Esophagus muscularis mucosa (tissue), 4 donors: ENCODE measurements at regions of chr6 and their contacts with region 1.

Region 1: DNA sequence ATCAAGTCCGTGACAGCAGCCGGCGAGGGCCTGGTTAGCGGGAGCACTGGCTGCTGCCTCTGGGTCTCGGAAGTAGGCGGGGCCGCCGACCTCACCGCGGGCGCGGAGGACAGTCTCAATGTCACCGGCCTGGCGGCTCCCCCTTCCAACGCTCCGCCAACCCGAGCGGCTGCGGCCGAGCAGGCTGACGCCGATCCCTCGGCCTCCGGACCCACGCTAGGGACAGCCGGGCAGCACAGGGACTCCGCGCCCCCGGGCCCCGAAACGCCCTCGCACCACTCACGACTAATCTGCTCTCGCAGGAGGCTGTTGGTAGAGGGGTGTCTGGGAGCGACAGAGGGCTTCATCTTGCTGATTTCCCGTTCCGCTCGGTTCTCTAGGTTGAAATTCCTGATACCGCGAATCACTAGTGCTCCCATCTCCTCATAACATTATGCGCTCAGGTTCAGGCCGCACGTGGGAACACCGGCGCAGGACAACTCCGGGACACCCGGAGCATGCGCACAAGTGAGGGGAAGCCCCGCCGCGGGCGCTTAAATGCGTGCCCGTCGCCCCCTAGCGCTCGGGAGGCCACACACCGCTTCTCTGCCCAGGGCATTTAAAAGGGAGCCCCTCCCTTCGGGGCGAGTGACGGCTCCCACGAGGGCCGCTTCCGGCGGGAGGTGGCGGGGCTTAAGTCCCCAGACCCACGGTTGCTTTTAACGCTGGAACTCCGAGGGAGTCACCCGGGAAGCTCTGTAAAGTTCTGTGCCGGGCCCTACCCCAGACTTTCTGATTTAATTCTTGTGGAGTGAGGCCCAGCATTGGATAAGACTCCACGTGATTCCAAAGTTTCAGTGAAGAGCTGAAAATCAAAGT is at the start of gene NDUFAF4:
- DNase-seq: peak; percentile 97
- H3K4me3 ChIP-seq: peak within 1 kb of the TSS; percentile 80 to 98 (median 88)
- H3K27ac ChIP-seq: peak within 1 kb of the TSS; percentile 89 to 94 (median 92)
- H3K4me1 ChIP-seq: peaks cover 40 to 50% (median 43%) of the 10 kb centered on the region in 4 donors
- H3K27me3 ChIP-seq: peaks cover 0 to 4% (median 0%) of the 10 kb centered on the region in 4 donors
- CTCF ChIP-seq: peak; percentile 93 to 96 (median 94)
- EP300 ChIP-seq: no peak
- POLR2A ChIP-seq: peak; percentile 19
- total RNA-seq, gene NDUFAF4: 26.1 to 36.2 (median 31.0) TPM

Region 2: DNA sequence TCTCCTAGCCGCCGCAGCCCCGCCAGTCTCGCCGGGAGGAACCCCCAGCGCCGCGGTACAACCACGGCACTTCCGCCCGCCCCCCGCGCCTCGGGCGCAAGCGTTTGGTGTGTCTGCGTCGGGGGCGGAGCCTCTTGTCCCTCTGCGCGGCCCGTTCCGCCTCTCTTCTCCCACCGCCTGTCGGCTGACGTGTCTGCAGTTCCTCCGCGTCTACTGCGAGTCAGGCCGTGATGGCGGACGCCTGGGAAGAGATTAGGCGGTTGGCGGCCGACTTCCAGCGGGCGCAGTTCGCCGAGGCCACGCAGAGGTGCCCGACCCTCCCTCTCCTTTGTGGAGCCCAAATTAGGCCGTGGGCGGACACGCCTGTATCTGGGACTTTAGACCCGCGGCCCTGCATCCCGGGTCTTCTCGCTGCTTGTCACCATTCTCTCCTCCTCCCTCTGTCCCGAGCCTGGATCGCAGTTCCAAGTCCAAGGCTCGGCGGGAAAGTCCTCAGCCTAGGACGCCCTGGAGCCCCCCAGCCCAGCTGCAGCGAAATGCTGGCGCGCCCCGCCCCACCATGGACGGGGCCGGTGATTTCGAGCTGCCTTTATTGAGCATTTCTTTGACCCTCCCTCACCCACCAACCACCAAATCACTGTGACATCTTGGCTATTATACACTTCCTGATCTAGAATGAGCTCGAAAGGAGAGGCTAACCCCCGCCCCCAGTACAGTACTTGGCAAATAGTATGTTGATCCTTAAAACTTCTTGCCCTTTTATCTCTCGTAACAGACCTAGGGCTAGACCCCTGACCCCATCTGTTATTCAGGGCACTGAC is 375.8 kb before region 1 on chr6 and contains the start of gene UFL1:
- intact Hi-C with region 1: loop called (anchors 10 kb)
- DNase-seq: peak; percentile 97
- H3K4me3 ChIP-seq: peak within 1 kb of the TSS; percentile 72 to 95 (median 79)
- H3K27ac ChIP-seq: peak within 1 kb of the TSS; percentile 92 to 97 (median 93)
- H3K4me1 ChIP-seq: peaks cover 21 to 38% (median 30%) of the 10 kb centered on the region in 4 donors
- H3K27me3 ChIP-seq: no peaks in the 10 kb centered on the region
- CTCF ChIP-seq: peak in 1 of 3 experiments; percentile 27
- EP300 ChIP-seq: no peak
- POLR2A ChIP-seq: peak; percentile 69
- total RNA-seq, gene UFL1: 21.3 to 27.0 (median 23.2) TPM

Region 3: DNA sequence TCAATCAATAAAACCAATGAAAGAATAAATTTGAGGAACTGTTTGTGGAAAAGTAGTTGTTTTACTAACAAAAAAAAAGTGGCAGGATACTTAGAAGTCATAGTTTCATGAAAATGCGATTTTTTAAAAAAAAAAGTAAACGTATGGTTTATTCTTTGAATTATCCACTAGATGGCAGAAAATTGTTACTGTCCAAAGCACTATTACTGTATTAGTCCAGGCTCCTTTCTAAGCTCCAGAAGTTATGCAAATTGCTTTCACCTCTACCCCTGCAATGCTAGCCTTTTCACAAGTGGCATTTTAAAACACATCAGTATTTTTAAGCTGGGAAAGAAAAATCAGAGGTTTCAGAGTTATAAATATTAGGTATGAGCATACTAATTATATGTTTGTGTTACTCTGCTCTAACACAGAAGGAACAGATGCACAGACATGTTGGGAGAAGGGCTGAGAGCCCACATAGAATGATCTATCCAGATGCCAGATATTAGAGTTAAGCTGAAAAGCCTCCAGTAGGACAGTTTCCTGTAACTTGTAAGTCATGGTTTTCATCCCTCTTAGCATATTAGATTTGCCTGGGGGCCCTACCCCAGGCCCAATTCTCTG is 270.8 kb before region 1 on chr6:
- intact Hi-C with region 1: loop called (anchors 10 kb)
- DNase-seq: no peak
- H3K4me3 ChIP-seq: no peak overlapping the region
- H3K27ac ChIP-seq: no peak overlapping the region
- H3K4me1 ChIP-seq: peaks cover 0 to 3% (median 0%) of the 10 kb centered on the region in 4 donors
- H3K27me3 ChIP-seq: no peaks in the 10 kb centered on the region
- CTCF ChIP-seq: peak; percentile 14 to 38 (median 27)
- EP300 ChIP-seq: no peak
- POLR2A ChIP-seq: no peak

Region 4: DNA sequence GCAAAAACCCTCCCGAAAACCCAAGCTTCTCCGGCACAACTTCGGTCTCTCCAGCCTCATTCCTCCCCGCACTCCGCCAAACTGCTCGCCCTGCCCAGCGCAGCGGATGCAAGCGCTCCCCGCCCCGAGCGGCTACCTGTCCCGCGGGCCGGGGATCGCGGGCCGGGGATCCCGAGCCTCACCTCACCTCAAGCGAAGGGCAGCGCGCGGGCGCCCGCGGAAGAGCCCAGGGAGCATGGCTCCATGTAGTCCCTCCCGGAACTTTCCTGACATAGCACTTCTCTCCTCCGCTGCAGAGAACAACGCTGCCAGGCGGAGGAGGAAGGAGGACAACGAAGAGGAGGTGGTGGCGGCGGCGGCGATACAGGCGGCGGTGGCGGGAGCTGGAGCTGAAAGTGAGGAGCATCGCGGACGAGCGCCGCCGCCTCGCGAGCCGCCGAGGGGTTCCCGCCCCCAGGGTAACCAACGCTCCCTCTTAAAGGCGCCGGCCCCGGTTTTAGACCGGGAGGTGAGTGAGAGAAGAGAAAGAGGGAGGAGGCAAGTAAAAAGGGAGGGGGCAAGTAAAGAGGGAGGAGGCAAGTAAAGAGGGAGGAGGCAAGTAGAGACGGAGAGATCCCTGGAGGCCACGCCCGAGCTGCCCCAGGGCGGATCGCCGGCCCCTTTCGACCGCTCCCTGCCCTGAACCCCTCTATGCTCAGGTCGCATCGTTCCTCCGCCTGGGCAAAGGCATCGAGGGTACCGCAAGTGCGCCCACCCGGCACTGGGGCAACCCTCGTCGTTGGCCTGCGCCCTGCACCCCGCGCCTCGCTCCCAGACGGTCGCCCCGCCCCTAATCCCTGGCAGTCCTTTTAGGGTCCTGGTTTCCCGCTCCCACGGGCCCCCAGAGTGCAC is 60.3 kb before region 1 on chr6 and contains the start of gene GPR63:
- intact Hi-C with region 1: loop called (anchors 5 kb)
- DNase-seq: no peak
- H3K4me3 ChIP-seq: peak within 1 kb of the TSS; percentile 72 to 87 (median 78)
- H3K27ac ChIP-seq: peak within 1 kb of the TSS; percentile 33 to 77 (median 65)
- H3K4me1 ChIP-seq: peaks cover 10 to 21% (median 14%) of the 10 kb centered on the region in 4 donors
- H3K27me3 ChIP-seq: no peaks in the 10 kb centered on the region
- CTCF ChIP-seq: no peak
- EP300 ChIP-seq: no peak
- POLR2A ChIP-seq: no peak
- total RNA-seq, gene GPR63: 0.83 to 2.0 (median 0.93) TPM

Region 5: DNA sequence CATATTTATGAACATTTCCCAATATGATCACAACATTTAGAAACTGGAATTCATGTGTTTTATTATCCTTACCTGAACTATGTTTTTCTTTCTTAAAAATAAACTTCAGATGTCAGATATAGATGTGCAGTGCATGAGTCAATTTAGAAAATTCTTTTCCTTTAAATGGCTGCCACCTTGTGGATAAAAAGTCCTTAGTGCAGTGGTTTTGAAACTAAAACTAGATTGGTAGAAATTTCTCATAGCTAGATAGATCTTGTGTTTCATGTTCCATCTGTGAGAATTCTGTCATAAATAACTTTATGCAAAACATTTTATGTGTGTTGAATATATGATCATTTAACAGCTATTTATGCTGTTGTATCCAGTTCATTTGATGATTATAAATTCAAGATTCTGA is 161.9 kb after region 1 on chr6:
- intact Hi-C with region 1: loop called (anchors 2 kb)
- DNase-seq: no peak
- H3K4me3 ChIP-seq: no peak overlapping the region
- H3K27ac ChIP-seq: no peak overlapping the region
- H3K4me1 ChIP-seq: peaks cover 0 to 5% (median 0%) of the 10 kb centered on the region in 4 donors
- H3K27me3 ChIP-seq: peaks cover 0 to 5% (median 0%) of the 10 kb centered on the region in 4 donors
- CTCF ChIP-seq: peak; percentile 45 to 56 (median 51)
- EP300 ChIP-seq: no peak
- POLR2A ChIP-seq: no peak

Region 6: DNA sequence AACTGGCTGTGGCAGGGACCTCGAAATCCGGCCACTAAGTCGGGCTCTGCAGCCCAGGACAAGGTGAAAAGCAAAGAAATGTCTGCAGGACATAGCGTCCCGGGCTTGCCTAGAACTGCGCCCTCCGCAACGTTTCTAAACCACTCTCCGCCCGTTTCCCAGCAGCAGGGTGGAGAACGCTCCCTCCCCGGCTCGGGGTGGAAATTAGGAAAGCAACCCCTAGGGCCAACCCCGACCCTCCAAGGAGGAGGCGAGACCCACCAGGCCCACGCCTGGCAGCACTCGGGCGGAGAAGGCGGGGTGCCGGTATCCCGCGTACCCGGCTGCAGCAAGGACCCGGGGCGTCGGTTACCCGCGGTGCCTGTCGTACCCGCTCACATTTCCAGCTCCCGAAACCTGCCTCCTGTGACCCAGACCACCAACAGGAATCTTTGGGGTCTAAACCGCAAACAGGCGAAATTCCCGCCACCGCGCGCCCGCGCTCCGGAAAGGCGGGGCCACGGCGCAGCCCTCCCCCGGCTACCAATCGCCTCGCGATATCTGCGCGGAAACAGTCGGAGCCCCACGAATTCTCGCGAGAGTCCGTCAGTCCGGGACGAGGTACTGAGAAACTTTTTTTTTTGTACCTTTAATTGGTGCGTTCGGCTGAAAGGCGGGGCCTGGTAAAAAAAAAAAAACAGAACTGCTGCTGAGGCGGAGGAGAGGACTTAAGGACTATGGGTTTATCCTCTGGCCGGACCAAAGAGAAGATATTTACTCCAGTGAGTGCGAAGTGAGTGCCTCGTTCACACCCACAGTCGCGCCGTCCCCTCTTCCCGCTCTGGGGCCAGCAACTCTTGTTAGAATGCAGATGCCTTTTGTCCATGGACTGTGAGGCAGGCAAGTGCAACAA is 385.4 kb after region 1 on chr6 and contains the start of gene MMS22L:
- intact Hi-C with region 1: loop called (anchors 10 kb)
- DNase-seq: peak; percentile 96
- H3K4me3 ChIP-seq: peak within 1 kb of the TSS; percentile 67 to 96 (median 92)
- H3K27ac ChIP-seq: peak within 1 kb of the TSS; percentile 70 to 83 (median 80)
- H3K4me1 ChIP-seq: peaks cover 8 to 18% (median 14%) of the 10 kb centered on the region in 4 donors
- H3K27me3 ChIP-seq: no peaks in the 10 kb centered on the region
- CTCF ChIP-seq: no peak
- EP300 ChIP-seq: no peak
- POLR2A ChIP-seq: no peak
- total RNA-seq, gene MMS22L: 2.8 to 5.5 (median 4.0) TPM